Gastrocnemius medialis (tissue), 4 donors: ENCODE measurements at regions of chr1 and their contacts with region 1.

Region 1: GRCh38 chr1:160193091-160193819 is 2.9 kb downstream of the CASQ1 start:
- DNase-seq: peak; percentile 78 to 86
- ATAC-seq: peak; percentile 66 to 81
- H3K4me3 ChIP-seq: peak overlapping the region; percentile 22 to 54 (median 34)
- H3K27ac ChIP-seq: peak overlapping the region; percentile 90 to 95 (median 92)
- H3K4me1 ChIP-seq: peaks cover 80 to 92% of the 10 kb centered on the region in 2 donors
- H3K27me3 ChIP-seq: no peaks in the 10 kb centered on the region
- CTCF ChIP-seq: peak; percentile 95 to 98 (median 98)
- POLR2A ChIP-seq: peak; percentile 8 to 57

Region 2: DNA sequence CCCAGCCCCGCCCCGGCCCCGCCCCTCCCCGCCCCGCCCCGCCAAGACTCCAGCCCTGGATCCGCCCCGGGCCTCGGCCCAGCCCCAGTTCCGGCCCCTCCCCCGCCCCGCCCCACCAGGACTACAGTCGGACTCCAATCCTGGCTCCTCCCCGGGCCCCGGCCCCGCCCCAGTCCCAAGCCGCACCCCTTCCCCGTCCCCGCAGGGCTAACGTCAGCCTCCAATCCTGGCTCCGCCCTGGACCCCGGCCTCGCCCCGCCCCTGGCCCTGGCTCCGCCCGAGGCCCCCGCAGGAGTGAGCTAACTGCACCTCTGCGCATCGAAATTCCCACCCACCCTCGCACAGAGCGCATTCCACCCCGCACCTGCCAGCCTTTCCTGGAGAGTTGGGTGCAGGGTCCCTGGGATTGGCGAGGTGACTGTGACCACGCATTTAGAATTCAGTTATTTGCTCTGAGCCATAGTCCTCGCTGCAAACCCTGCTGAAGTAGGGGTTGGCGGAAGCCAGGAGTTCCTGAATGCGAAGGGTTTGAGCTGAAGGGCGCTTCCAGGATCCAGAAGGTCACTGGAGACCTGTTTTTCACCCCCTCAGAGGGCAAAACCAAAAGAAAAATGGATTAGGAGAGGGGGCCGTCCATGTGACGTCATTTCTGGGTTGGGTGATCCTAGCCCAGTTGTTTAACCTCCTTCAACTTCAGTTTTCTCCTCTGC is 94.2 kb before region 1 on chr1:
- in situ Hi-C with region 1: loop called in 2 of 4 experiments (anchors 10 kb)
- intact Hi-C with region 1: loop called (anchors 2 kb)
- DNase-seq: peak; percentile 97 to 98
- ATAC-seq: peak; percentile 53 to 59
- H3K4me3 ChIP-seq: peak overlapping the region; percentile 49 to 77 (median 66)
- H3K27ac ChIP-seq: peak overlapping the region; percentile 88 to 96 (median 94)
- H3K4me1 ChIP-seq: peaks cover 44 to 47% of the 10 kb centered on the region in 2 donors
- H3K27me3 ChIP-seq: no peaks in the 10 kb centered on the region
- CTCF ChIP-seq: no peak
- POLR2A ChIP-seq: peak; percentile 21 to 42

Region 3: DNA sequence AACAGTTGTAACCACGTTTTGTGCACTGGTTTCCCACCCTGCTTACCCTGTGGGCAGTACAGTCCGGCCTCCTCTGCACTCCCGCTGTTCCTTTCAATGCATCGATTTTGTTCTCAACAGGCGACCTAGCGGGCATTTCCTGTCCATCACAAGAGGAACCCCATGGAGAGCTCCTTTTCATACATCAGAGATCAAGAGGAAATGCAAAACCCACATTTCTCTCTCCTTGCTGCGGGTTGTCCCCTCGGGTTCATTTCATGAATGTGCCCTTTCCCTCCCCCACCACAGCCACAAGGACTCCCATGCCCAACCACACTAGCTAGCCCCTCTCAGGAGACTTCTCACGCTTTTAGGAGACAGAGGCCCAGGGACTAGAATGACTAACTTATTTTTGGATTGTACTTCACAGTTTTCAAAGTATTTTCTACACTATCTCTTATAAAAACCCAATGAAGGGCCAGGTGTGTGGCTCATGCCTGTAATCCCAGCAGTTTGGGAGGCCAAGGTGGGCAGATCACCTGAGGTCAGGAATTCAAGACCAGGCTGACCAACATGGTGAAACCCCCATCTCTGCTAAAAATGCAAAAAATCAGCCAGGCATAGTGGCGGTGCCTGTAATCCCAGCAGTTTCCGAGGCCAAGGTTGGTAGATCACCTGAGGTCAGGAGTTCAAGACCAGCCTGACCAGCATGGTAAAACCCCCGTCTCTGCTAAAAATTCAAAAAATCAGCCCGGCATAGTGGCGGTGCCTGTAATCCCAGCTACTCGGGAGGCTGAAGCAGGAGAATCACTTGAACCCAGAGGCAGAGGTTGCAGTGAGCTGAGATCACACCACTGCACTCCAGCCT is 23.5 kb before region 1 on chr1:
- in situ Hi-C with region 1: no loop called
- intact Hi-C with region 1: loop called (anchors 2 kb)
- DNase-seq: no peak
- ATAC-seq: no peak
- H3K4me3 ChIP-seq: no peak overlapping the region
- H3K27ac ChIP-seq: peak overlapping the region in 1 of 4 donors; percentile 71
- H3K4me1 ChIP-seq: peaks cover 8 to 20% of the 10 kb centered on the region in 2 donors
- H3K27me3 ChIP-seq: no peaks in the 10 kb centered on the region
- CTCF ChIP-seq: no peak
- POLR2A ChIP-seq: no peak

Region 4: DNA sequence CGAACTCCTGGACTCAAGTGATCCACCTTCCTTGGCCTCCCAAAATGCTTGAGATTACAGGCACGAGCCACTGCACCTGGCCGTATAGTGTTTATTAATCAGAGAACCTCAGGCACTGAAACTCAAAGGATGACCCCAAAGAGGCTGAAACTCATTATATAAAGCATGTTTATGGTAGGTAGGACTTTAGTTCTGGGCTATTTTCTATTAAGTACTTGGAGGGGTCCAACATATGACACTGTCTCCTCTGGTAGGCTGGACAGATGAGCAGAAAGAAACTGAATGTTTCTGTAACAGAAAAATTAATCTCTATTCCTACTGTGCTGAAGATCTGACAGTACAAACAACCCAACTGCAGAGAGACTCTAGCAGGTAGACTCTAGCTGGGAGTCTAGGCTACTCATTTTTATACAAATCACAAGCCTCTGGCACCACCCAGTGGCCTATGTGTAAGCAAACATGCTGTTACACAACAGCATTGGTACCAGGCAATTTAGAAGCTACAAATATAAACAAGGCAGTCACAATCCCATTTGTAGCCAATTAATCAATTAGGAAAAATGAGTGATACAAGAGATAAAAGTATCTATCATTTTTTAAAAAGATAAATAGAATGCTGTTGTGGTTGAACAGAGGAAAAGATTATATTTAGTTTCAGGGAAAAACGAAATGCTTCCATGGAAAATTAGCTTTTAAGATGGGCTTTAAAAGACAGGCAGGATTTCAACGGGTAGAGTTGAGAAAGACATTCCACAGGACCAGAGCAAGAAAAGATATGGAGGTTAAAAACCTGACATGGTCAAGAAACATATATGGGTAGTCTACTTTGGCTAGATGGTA is 58.7 kb after region 1 on chr1:
- in situ Hi-C with region 1: loop called in 3 of 4 experiments (anchors 5 kb)
- intact Hi-C with region 1: loop called (anchors 1 kb)
- DNase-seq: peak; percentile 64 to 73
- ATAC-seq: peak; percentile 95 to 98
- H3K4me3 ChIP-seq: no peak overlapping the region
- H3K27ac ChIP-seq: peak overlapping the region; percentile 61 to 86 (median 81)
- H3K4me1 ChIP-seq: peaks cover 56 to 57% of the 10 kb centered on the region in 2 donors
- H3K27me3 ChIP-seq: no peaks in the 10 kb centered on the region
- CTCF ChIP-seq: peak; percentile 68 to 86 (median 77)
- POLR2A ChIP-seq: no peak

Region 5: DNA sequence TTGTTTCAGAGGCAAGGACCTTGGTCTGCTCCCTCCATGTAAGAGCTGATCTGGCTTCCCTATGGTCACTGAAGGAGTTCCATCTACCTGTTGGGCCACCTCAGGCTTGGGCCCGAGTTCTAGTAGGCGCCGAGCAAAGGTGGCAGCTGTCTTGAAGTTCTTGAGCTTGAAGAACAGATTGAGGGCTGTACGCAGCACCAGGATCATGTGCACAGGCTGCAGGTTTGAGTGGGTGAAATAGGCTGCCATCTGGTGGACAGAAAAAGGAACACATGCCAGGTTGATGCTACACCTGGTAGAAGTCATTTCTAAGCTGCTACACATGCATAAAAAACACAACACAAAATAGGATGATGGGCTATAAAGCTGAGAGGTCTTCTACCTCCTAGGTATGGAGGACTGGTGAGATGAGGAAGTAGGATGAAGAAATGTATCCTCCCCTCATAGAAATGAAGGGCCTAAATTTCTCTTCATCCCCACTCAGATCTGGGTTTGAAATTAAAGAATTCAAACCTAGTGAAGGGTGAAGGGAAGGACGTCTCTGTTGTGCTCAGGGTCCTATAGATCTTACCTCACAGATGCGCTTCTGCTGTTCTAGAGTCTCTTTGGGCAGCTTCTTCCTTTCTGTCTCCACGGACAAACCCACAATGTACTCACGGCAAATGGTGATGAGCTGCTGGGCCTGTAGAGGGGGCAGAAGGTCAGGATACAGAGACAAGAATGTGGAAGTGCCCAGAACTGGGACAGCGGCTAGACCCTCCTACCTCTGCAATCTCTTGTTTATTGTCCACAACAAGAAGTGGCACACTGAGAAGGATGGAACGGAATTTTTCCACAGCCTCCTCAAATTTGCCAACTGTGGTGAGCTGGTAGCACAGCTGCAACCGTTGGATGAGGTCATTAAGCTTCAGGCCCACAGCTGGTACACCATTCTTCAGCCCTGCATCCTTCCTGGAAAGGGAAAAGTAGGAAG is 98.3 kb after region 1 on chr1:
- in situ Hi-C with region 1: loop called in 1 of 4 experiments (anchors 5 kb)
- intact Hi-C with region 1: loop called (anchors 2 kb)
- DNase-seq: peak; percentile 51 to 79
- ATAC-seq: peak; percentile 89 to 92
- H3K4me3 ChIP-seq: no peak overlapping the region
- H3K27ac ChIP-seq: peak overlapping the region in 2 of 4 donors; percentile 34 to 61
- H3K4me1 ChIP-seq: no peaks in the 10 kb centered on the region
- H3K27me3 ChIP-seq: no peaks in the 10 kb centered on the region
- CTCF ChIP-seq: peak; percentile 74 to 85 (median 80)
- POLR2A ChIP-seq: no peak

Region 6: GRCh38 chr1:160307118-160307854 is 114.0 kb after region 1 on chr1:
- in situ Hi-C with region 1: no loop called
- intact Hi-C with region 1: no loop called
- DNase-seq: no peak
- ATAC-seq: no peak
- H3K4me3 ChIP-seq: no peak overlapping the region
- H3K27ac ChIP-seq: peak overlapping the region in 1 of 4 donors; percentile 32
- H3K4me1 ChIP-seq: no peaks in the 10 kb centered on the region
- H3K27me3 ChIP-seq: no peaks in the 10 kb centered on the region
- CTCF ChIP-seq: no peak
- POLR2A ChIP-seq: no peak

Region 7: DNA sequence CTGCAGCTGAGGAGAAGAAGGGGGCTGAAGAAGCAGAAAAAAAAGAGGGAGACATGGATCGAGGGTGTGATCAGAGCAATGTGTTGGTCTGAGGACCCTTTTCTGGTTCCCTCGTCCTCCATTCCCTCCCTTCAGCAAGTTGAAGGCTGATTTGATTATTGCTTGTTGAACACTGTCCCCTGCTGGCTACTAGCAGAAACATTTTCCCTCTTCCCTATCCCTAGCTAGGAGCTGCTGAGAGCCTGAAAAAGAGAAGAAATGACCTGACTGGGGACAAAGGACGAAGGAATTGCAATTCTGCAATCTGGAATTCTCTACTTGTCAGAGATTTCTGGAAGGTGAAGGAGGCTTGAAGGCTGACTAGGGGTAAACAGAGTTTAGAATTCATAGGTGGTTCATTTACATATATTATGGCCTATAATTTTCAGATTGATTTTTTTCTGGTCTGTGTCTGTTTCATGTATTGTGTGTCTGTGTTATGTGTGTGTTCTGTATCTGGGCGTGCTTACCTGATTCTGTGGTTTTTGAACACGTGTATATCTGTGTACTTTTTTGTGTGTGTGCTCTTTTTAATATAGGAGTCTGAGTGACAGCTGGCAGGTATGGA is 183.4 kb after region 1 on chr1:
- in situ Hi-C with region 1: loop called in 1 of 4 experiments (anchors 10 kb)
- intact Hi-C with region 1: loop called (anchors 2 kb)
- DNase-seq: no peak
- ATAC-seq: peak; percentile 85 to 96
- H3K4me3 ChIP-seq: no peak overlapping the region
- H3K27ac ChIP-seq: no peak overlapping the region
- H3K4me1 ChIP-seq: peaks cover 0 to 9% of the 10 kb centered on the region in 2 donors
- H3K27me3 ChIP-seq: no peaks in the 10 kb centered on the region
- CTCF ChIP-seq: peak; percentile 83 to 96 (median 87)
- POLR2A ChIP-seq: no peak